Ascending aorta (tissue), 2 donors: ENCODE measurements at regions of chr4 and their contacts with region 1.

Region 1: DNA sequence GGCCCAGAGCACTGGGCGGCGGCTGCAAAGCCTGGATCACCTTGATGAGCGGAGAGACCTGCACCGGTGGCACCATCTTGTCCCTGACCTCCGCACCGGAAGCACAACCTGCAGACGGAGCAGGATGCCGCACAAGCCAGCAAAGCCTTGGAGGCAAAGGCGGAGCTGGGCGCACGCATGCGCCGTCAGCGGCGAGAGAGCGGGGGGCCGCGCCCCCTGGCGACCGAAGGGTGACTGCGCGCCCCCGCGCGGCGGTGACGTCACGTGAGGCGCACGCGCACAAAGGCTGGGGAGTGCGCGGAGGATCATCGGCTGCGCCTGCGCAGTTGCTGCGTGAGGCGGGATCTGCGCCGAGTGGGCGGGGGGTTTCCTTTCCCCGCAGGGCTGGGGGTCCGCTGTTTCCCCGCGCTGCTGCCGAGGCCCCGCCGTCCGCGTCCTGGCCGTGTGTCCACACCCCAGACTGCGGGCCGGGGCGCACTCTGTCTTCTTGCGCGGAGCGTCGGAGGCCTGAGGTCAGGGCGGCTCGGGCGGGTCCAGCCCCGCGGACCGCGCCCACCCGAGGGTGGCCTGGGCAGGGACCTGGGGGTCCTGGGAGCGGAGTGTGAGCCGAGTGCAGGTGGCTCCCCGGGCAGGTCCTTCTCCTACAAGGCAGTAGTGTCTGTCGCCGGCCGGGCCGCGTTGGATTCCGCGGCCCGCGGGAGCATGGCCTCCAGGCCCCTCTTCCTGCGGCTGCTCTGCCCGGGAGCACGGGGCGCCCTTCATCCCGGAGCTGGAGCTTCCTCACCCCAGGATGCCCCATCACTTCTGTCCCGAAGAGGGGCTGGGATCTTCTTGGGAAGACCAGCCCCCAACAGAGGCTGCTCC is at the starts of genes ATP5ME and MYL5:
- DNase-seq: peak; percentile 92 to 98
- H3K4me3 ChIP-seq: peak within 1 kb of the TSS; percentile 68 to 92
- H3K27ac ChIP-seq: peak within 1 kb of the TSS; percentile 92
- H3K4me1 ChIP-seq: peaks cover 9 to 15% of the 10 kb centered on the region in 2 donors
- H3K27me3 ChIP-seq: no peaks in the 10 kb centered on the region
- CTCF ChIP-seq: peak; percentile 76 to 85 (median 85)
- total RNA-seq, gene ATP5ME: not detected
- total RNA-seq, gene MYL5: 1.1 TPM

Region 2: GRCh38 chr4:244471-244870 is 429.9 kb before region 1 on chr4:
- intact Hi-C with region 1: loop called (anchors 1 kb)
- DNase-seq: peak in 1 of 2 donors; percentile 67
- H3K4me3 ChIP-seq: no peak overlapping the region
- H3K27ac ChIP-seq: no peak overlapping the region
- H3K4me1 ChIP-seq: no peaks in the 10 kb centered on the region
- H3K27me3 ChIP-seq: no peaks in the 10 kb centered on the region
- CTCF ChIP-seq: peak; percentile 18 to 60 (median 47)

Region 3: GRCh38 chr4:473570-474457 is 200.6 kb before region 1 on chr4:
- intact Hi-C with region 1: loop called (anchors 1 kb)
- DNase-seq: peak; percentile 89 to 97
- H3K4me3 ChIP-seq: peak overlapping the region; percentile 90 to 95
- H3K27ac ChIP-seq: peak overlapping the region; percentile 84 to 85
- H3K4me1 ChIP-seq: peaks cover 0 to 4% of the 10 kb centered on the region in 2 donors
- H3K27me3 ChIP-seq: no peaks in the 10 kb centered on the region
- CTCF ChIP-seq: no peak

Region 4: GRCh38 chr4:705278-706082 is 31.1 kb after region 1 on chr4 and contains the start of gene PCGF3:
- intact Hi-C with region 1: loop called (anchors 1 kb)
- DNase-seq: peak; percentile 81 to 98
- H3K4me3 ChIP-seq: peak within 1 kb of the TSS; percentile 75 to 100
- H3K27ac ChIP-seq: peak within 1 kb of the TSS; percentile 79 to 92
- H3K4me1 ChIP-seq: peaks cover 6 to 13% of the 10 kb centered on the region in 2 donors
- H3K27me3 ChIP-seq: no peaks in the 10 kb centered on the region
- CTCF ChIP-seq: no peak
- total RNA-seq, gene PCGF3: 124 TPM

Region 5: DNA sequence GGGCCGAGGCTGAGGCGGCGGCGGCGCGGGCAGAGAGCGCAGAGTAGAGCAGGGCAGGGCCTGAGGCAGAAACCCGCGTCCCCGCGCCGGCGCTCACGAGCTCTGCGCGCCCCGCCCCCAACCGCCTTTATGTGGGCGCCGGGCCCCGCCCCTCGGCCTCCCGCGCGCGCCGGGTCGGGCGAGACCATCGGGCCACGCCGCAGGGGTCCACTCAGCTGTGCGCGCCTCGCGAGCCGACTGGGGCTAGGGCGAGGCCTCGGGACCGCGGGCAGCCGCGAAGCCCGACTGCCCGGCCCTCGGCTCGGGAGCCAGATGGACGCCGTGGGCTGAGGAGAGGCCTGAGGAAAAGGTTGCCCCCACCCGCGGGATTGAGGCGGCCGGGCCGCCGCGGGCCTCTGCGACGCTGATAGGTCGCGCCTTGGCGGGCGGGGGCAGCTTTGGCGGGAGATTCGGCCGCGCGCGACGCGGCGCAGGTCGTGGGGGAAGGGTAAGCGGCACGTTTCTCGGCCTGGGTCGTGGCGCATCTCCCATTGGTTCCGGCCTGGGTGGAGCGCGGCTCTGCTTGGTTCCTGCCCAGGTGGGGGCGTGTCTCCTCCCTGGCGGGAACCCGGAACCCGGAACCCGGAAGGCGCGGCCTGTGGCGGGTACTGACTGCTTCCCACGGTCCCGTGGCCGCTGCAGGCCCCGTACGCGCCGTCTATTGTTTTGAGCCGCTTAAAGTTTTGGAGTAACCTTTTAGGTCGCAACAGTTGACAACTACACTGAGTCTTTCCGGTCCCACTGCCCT is 1038.0 kb after region 1 on chr4 and contains the start of gene SLBP:
- intact Hi-C with region 1: loop called (anchors 10 kb)
- DNase-seq: peak; percentile 86 to 98
- H3K4me3 ChIP-seq: peak within 1 kb of the TSS; percentile 93 to 94
- H3K27ac ChIP-seq: peak within 1 kb of the TSS; percentile 99 to 100
- H3K4me1 ChIP-seq: peaks cover 0 to 10% of the 10 kb centered on the region in 2 donors
- H3K27me3 ChIP-seq: no peaks in the 10 kb centered on the region
- CTCF ChIP-seq: no peak
- total RNA-seq, gene SLBP: 218 TPM